Activated naive CD4-positive, alpha-beta T cell treated with anti-CD3 and anti-CD28 coated beads for 36 hours (primary cell): ENCODE measurements at regions of chr6 and their contacts with region 1.

Region 1: GRCh38 chr6:139369568-139370282 is 4.7 kb downstream of the CITED2 start:
- DNase-seq: peak; percentile 29
- H3K4me3 Mint-ChIP-seq: peak overlapping the region; percentile 59
- H3K27ac Mint-ChIP-seq: peak overlapping the region; percentile 85
- H3K4me1 Mint-ChIP-seq: peaks cover 42% of the 10 kb centered on the region
- H3K27me3 Mint-ChIP-seq: no peaks in the 10 kb centered on the region

Region 2: DNA sequence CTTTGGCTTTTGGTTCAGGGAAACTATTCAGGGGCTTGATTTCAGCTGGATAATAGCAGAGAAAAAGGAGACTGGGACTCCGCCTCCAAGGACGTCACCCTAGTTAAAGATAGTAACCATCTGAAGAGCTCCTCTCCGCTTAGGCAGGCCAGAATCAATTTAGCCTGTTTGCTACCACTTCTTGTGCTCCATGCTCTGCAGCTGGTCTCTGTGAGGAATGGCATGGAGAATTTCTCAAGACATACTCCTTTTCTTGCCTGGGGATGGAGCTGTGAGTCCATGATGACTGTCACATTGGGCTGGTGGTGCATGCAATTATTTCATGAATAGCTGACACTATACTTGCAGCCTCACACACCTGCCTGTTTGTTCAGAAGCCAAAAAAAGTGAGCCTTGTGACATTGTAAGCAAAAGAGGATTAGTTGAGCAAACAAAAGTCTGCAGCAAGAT is 139.3 kb before region 1 on chr6:
- CTCF ChIA-PET with region 1: interaction called, 17 read pairs
- intact Hi-C with region 1: loop called (anchors 1 kb)
- DNase-seq: peak; percentile 46
- H3K4me3 Mint-ChIP-seq: no peak overlapping the region
- H3K27ac Mint-ChIP-seq: no peak overlapping the region
- H3K4me1 Mint-ChIP-seq: peaks cover 5% of the 10 kb centered on the region
- H3K27me3 Mint-ChIP-seq: no peaks in the 10 kb centered on the region

Region 3: DNA sequence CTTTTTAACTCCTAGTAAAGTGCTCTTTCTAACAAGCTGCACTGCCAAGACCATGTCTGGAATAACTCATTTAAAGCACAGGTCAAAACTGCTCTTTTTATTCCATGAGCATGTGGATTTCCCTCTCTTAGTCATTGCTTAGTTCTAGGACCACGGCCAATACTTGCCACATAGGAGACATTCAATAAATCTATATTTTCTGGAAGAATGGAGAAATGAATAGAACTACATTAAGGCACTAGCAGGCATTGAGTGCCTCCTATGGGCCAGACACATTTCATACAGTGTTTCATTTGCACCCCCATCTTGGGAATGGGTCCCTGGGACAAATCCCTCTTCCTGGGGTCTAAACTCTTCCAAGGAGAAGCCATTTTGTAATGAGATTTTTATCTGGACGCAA is 557.5 kb after region 1 on chr6:
- CTCF ChIA-PET with region 1: interaction called, 4 read pairs
- intact Hi-C with region 1: loop called (anchors 1 kb)
- DNase-seq: peak; percentile 6
- H3K4me3 Mint-ChIP-seq: no peak overlapping the region
- H3K27ac Mint-ChIP-seq: no peak overlapping the region
- H3K4me1 Mint-ChIP-seq: no peaks in the 10 kb centered on the region
- H3K27me3 Mint-ChIP-seq: peaks cover 1% of the 10 kb centered on the region

Region 4: DNA sequence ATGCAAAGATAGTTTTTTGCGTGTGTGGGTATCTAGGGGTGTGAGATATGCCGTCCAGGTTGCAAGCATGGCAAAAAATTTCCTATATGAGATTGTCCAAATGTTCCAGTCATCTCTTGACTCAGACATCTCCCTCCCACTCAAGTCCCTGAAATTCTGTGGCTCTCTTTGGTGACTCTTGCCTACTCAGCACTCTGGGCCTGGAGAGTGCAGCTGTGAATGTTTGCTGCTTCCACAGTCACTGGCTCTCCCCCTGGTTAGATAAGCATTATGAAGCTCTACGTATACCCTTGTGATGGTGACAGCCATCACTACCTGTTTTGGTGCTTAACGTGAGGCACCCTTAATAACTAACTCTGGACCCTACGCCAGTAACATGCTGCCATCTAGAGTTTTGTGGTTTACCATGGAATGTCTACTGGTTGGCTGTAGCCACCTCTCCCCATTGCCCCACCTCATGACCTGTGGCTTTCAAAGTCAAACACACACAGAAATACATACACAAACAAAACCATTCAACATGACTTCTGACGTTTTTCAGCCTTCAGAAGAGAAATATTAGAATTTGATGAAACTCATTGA is 626.6 kb after region 1 on chr6:
- CTCF ChIA-PET with region 1: no interaction called
- intact Hi-C with region 1: loop called (anchors 1 kb)
- DNase-seq: peak; percentile 8
- H3K4me3 Mint-ChIP-seq: no peak overlapping the region
- H3K27ac Mint-ChIP-seq: no peak overlapping the region
- H3K4me1 Mint-ChIP-seq: no peaks in the 10 kb centered on the region
- H3K27me3 Mint-ChIP-seq: no peaks in the 10 kb centered on the region

Region 5: GRCh38 chr6:140441256-140441655 is 1071.5 kb after region 1 on chr6:
- CTCF ChIA-PET with region 1: no interaction called
- intact Hi-C with region 1: loop called (anchors 2 kb)
- DNase-seq: peak; percentile 27
- H3K4me3 Mint-ChIP-seq: no peak overlapping the region
- H3K27ac Mint-ChIP-seq: no peak overlapping the region
- H3K4me1 Mint-ChIP-seq: no peaks in the 10 kb centered on the region
- H3K27me3 Mint-ChIP-seq: peaks cover 4% of the 10 kb centered on the region

Region 6: GRCh38 chr6:140921366-140922226 is 1551.9 kb after region 1 on chr6:
- CTCF ChIA-PET with region 1: no interaction called
- intact Hi-C with region 1: loop called (anchors 1 kb)
- DNase-seq: peak; percentile 32
- H3K4me3 Mint-ChIP-seq: no peak overlapping the region
- H3K27ac Mint-ChIP-seq: no peak overlapping the region
- H3K4me1 Mint-ChIP-seq: no peaks in the 10 kb centered on the region
- H3K27me3 Mint-ChIP-seq: peaks cover 8% of the 10 kb centered on the region